GM12878 (cell line): ENCODE measurements at regions of chr12 and their contacts with region 1.

Region 1: GRCh38 chr12:54220092-54220557 is 31.3 kb upstream of the SMUG1 start:
- DNase-seq: no peak
- ATAC-seq: peak; percentile 58
- H3K4me3 ChIP-seq: no peak overlapping the region
- H3K27ac ChIP-seq: no peak overlapping the region
- H3K4me1 ChIP-seq: peaks cover 30% of the 10 kb centered on the region
- H3K27me3 ChIP-seq: peaks cover 0 to 1% of the 10 kb centered on the region in 2 experiments; a peak in 1 of 4 replicates
- CTCF ChIP-seq: peak; percentile 84 to 90 (median 90)
- EP300 ChIP-seq: no peak
- POLR2A ChIP-seq: no peak
- RAD21 ChIP-seq: peak; percentile 87

Region 2: DNA sequence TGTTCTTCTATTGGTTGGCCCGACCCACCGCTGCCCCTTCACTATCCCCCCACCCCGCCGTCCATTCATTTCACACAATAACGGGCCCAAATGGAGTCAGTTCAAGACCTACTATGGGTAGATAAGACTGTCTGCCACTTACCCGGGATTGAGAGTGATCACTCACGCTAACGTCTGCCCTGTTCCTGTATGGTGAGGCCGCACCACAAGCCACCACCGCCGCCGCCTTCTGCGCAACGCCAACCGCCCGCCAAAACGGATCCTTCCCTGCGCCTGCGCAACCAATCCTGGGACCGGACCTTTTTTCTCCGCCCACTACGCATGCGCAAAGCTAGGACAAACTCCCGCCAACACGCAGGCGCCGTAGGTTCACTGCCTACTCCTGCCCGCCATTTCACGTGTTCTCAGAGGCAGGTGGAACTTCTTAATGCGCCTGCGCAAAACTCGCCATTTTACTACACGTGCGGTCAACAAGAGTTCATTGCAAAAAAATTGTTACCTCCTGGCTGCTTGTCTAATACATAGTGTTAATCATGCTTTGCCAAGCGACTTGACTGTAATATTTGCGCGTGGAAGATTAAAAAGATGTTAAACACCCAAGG is 59.8 kb after region 1 on chr12 and contains the start of gene CBX5:
- CTCF ChIA-PET with region 1: interaction called, 24 read pairs
- POLR2A ChIA-PET with region 1: interaction called, 6 read pairs
- RAD21 ChIA-PET with region 1: interaction called, 4 read pairs
- SMC1A ChIA-PET with region 1: interaction called, 9 read pairs
- in situ Hi-C with region 1: no loop called
- intact Hi-C with region 1: loop called (anchors 2 kb)
- DNase-seq: peak; percentile 98
- ATAC-seq: peak; percentile 48
- H3K4me3 ChIP-seq: peak within 1 kb of the TSS; percentile 81
- H3K27ac ChIP-seq: peak within 1 kb of the TSS; percentile 99
- H3K4me1 ChIP-seq: peaks cover 18% of the 10 kb centered on the region
- H3K27me3 ChIP-seq: no peaks in the 10 kb centered on the region
- CTCF ChIP-seq: no peak
- EP300 ChIP-seq: no peak
- POLR2A ChIP-seq: peak; percentile 83
- RAD21 ChIP-seq: no peak
- polyA plus RNA-seq, gene CBX5: 66.9 to 67.1 TPM

Region 3: GRCh38 chr12:54379401-54380201 is 159.5 kb after region 1 on chr12:
- CTCF ChIA-PET with region 1: interaction called, 36 read pairs
- POLR2A ChIA-PET with region 1: no interaction called
- RAD21 ChIA-PET with region 1: interaction called, 4 read pairs
- SMC1A ChIA-PET with region 1: interaction called, 8 read pairs
- in situ Hi-C with region 1: no loop called
- intact Hi-C with region 1: no loop called
- DNase-seq: no peak
- ATAC-seq: peak; percentile 95
- H3K4me3 ChIP-seq: no peak overlapping the region
- H3K27ac ChIP-seq: no peak overlapping the region
- H3K4me1 ChIP-seq: peaks cover 4% of the 10 kb centered on the region
- H3K27me3 ChIP-seq: no peaks in the 10 kb centered on the region
- CTCF ChIP-seq: peak; percentile 100; a peak in 5 of 6 replicates
- EP300 ChIP-seq: no peak
- POLR2A ChIP-seq: no peak
- RAD21 ChIP-seq: peak; percentile 73